Panc1 (cell line): ENCODE measurements at regions of chr5 and their contacts with region 1.

Region 1: DNA sequence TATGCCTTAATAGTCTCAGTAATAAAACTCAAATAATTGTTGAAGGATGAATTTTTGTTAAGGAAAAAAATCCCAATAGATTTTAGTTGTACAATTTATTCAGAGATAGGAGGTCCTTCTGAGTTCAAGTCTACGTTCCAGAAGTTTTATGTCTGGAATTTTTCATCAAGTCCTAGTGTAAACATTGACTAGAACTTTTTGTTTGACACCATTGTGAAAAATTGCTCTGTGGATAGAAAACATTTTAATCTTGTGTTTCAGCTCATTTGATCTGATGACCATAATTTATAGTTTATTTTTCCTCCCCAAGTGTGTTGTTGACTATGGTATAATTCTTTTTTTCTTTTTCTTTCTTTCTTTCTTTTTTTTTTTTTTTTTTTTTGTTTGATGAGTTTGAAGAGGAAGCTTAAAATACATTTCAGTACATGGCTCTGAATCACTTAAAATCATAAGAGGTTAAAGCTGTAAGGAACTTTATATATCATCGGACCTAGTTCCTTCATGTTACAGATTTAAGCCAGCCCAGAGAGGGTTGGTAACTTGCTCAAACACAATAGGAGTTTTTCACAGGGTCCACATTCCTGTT is 20.7 kb downstream of the ITGA1 start:
- DNase-seq: no peak
- ATAC-seq: no peak
- H3K4me3 ChIP-seq: no peak overlapping the region
- H3K27ac ChIP-seq: no peak overlapping the region
- H3K4me1 ChIP-seq: peaks cover 8% of the 10 kb centered on the region
- H3K27me3 ChIP-seq: no peaks in the 10 kb centered on the region
- CTCF ChIP-seq: no peak

Region 2: GRCh38 chr5:53515988-53516387 is 707.6 kb after region 1 on chr5:
- CTCF ChIA-PET with region 1: interaction called, 10 read pairs
- POLR2A ChIA-PET with region 1: no interaction called
- in situ Hi-C with region 1: no loop called
- intact Hi-C with region 1: no loop called
- DNase-seq: no peak
- ATAC-seq: no peak
- H3K4me3 ChIP-seq: no peak overlapping the region
- H3K27ac ChIP-seq: no peak overlapping the region
- H3K4me1 ChIP-seq: no peaks in the 10 kb centered on the region
- H3K27me3 ChIP-seq: no peaks in the 10 kb centered on the region
- CTCF ChIP-seq: no peak